Right ventricle myocardium inferior (tissue), 1 donor: ENCODE measurements at regions of chr7 and their contacts with region 1.

Region 1: DNA sequence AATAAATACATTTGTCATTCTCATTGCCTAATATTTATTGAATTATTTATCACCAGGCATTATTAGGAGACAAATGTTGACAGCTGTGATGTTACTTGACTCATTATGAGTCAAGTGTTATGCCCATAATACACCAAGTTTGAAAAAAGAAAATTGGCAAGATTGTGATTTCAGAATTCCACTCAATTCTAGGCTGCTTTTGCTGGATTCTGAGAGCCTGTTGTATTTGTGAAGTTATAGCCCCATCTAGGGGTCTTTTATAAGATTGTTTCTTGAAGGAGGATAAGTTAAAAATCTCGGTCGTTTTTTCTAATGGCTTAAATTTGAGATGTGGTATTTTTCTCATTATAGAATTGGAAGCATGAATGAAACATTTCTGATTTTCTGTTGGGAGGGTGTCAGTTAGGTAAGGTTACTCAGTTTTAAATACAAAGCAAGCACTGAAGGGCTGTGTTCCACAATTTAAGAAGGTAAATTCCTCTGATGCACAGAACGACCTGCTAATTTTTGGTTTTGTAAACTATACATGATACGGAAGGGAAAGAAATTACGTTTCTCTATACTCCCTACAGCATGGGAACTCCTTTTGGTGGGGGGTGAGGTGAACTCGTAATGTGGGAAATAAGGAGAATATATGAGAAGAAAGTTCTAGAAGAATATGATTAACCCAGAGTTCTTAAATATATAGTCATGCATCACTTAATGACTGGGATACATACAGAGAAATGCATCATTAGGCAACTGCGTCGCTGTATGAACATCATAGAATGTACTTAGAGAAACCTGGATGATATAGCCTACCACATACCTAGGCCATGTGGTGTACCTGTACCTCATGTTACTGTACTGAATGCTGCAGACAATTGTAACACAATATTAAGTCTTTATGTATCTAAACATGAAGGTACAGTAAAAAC is 2.6 kb downstream of the STK31 start:
- DNase-seq: no peak
- ATAC-seq: no peak

Region 2: DNA sequence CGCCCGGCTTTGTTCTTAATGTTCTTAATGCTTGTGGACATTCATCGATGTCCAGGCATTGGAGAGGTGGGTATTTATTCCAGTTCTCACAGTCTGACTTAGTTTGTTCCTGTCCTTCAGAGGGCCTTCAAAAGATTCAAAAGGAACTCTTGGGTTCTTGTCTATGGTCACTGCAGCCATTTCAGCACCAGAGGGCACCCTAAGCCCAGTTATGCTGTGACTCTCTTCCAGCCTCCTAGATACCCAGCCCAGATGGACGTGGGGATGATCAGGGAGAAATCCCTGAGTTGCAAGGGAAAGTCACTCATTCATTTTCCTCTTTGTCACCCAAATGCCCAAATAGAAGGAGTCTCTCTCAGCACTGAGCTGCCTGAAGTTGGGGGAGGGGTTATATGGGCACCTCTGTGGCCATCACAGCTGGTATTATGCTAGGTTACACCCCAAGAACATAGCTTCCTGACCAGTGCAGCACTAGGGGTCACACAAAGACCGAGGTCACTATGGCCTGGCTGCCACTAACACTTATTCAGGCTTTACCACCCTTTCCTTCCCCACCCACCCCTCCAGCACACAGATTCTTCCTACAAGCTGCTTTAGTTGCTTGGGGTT is 141.9 kb before region 1 on chr7:
- intact Hi-C with region 1: loop called (anchors 1 kb)
- DNase-seq: peak; percentile 73
- ATAC-seq: peak; percentile 93

Region 3: DNA sequence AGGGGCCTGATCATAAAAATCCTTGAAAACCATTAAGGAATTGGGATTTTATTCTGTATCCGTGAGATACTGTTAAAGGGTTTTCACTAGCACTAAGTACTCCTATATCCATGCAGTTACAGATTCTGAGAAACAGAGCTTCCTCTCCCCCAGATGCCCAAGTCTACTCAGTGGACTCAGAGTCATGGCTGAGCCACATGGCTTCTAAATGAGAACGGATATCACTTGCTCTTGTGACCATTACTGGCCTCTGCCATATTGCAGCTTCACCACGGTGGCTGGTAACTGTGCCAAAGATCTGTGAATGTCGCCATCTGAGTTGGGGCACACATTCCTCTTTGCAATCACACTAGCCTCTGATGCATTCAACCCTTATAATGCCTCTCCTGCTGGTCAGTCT is 818.6 kb after region 1 on chr7:
- intact Hi-C with region 1: no loop called
- DNase-seq: no peak
- ATAC-seq: no peak